ENCODE measurements at regions of chr6 and their contacts with region 1.

Region 1: DNA sequence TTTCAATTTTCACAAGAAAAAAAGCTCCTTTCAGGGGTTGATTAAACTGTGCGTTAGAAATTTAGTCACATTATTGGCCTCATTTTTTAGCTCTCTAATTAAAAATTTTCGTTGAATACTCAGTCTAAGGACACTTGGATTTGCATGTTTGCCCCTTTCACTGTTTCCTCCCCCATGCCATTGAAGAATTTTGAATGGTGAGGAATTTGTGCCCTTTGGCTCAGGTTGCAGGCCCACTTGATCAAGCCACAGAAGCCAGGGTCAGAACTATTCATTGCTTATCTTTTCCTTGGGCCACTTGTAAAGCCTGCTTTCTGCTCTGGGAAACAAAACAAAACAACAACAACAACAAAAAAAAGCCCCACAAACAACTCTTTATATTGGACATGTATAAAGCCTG is 12.2 kb downstream of the LIN28B start:
- H3K4me3 ChIP-seq: no peak overlapping the region
- H3K27ac ChIP-seq: no peak overlapping the region
- H3K4me1 ChIP-seq: peaks cover 22% of the 10 kb centered on the region
- CTCF ChIP-seq: no peak

Region 2: GRCh38 chr6:104955927-104956730 is 13.0 kb before region 1 on chr6:
- CTCF ChIA-PET with region 1: interaction called, 6 read pairs
- POLR2A ChIA-PET with region 1: interaction called, 10 read pairs
- H3K4me3 ChIP-seq: peak overlapping the region; percentile 80
- H3K27ac ChIP-seq: peak overlapping the region; percentile 85
- H3K4me1 ChIP-seq: peaks cover 3% of the 10 kb centered on the region; the same call in 1 of the 2 replicates
- CTCF ChIP-seq: peak; percentile 47; the same call in 1 of the 2 replicates

Region 3: GRCh38 chr6:105164418-105164817 is 195.3 kb after region 1 on chr6:
- CTCF ChIA-PET with region 1: no interaction called
- POLR2A ChIA-PET with region 1: no interaction called
- H3K4me3 ChIP-seq: no peak overlapping the region
- H3K27ac ChIP-seq: no peak overlapping the region
- H3K4me1 ChIP-seq: peaks cover 9% of the 10 kb centered on the region; the same call in 1 of the 2 replicates
- CTCF ChIP-seq: no peak

Measured in HEK293 (cell line).